HEK293 (cell line): ENCODE measurements at regions of chr6 and their contacts with region 1.

Region 1: DNA sequence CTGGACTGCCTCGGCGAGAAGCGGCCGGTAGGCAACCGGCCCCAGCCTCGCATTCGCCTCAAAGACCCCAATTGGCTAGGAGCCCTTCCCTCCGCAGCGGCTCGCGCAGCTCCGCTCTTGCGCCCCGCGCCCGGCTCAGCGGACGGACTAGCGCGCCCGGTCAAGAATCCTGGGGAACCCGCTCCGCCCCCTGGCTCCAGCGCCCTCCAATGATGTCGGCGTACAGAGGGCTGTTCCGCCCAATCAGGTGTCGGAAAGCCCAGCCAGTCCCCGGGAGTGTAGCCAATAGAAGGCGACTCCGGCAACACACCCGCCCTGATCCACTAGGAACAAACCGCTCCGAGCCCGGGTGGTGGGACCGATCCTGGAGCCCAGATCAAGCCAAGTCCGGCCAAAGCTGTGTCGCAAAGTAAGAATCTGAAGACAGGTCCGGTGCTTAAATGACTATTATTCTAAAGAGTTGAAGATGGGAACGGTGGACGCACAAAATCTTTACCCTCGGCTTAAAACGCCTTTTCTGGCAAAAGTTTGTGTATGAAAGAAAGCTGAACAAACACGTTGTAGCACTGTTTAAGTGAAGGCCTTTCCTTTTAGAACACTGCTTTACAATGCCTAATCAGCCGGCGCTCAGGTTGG is 132.2 kb downstream of the OGFRL1 start:
- H3K4me3 ChIP-seq: peak overlapping the region; percentile 69
- H3K27ac ChIP-seq: peak overlapping the region; percentile 86
- H3K4me1 ChIP-seq: peaks cover 9% of the 10 kb centered on the region; the same call in 1 of the 2 replicates
- CTCF ChIP-seq: no peak

Region 2: GRCh38 chr6:71406871-71407860 is 13.6 kb before region 1 on chr6:
- CTCF ChIA-PET with region 1: interaction called, 3 read pairs
- POLR2A ChIA-PET with region 1: interaction called, 11 read pairs
- H3K4me3 ChIP-seq: no peak overlapping the region
- H3K27ac ChIP-seq: no peak overlapping the region
- H3K4me1 ChIP-seq: peaks cover 33% of the 10 kb centered on the region
- CTCF ChIP-seq: no peak